HEK293 (cell line): ENCODE measurements at regions of chr7 and their contacts with region 1.

Region 1: GRCh38 chr7:151157645-151158329 is 9.7 kb downstream of the GBX1 start:
- H3K4me3 ChIP-seq: no peak overlapping the region
- H3K27ac ChIP-seq: peak overlapping the region; percentile 25; the same call in 1 of the 2 replicates
- H3K4me1 ChIP-seq: peaks cover 9% of the 10 kb centered on the region; the same call in 1 of the 2 replicates
- CTCF ChIP-seq: no peak

Region 2: GRCh38 chr7:151123822-151124464 is 33.8 kb before region 1 on chr7:
- CTCF ChIA-PET with region 1: interaction called, 17 read pairs
- POLR2A ChIA-PET with region 1: no interaction called
- H3K4me3 ChIP-seq: no peak overlapping the region
- H3K27ac ChIP-seq: no peak overlapping the region
- H3K4me1 ChIP-seq: no peaks in the 10 kb centered on the region
- CTCF ChIP-seq: peak; percentile 99

Region 3: GRCh38 chr7:151146761-151147160 is 11.0 kb before region 1 on chr7:
- CTCF ChIA-PET with region 1: no interaction called
- POLR2A ChIA-PET with region 1: interaction called, 10 read pairs
- H3K4me3 ChIP-seq: no peak overlapping the region
- H3K27ac ChIP-seq: no peak overlapping the region
- H3K4me1 ChIP-seq: no peaks in the 10 kb centered on the region
- CTCF ChIP-seq: no peak

Region 4: DNA sequence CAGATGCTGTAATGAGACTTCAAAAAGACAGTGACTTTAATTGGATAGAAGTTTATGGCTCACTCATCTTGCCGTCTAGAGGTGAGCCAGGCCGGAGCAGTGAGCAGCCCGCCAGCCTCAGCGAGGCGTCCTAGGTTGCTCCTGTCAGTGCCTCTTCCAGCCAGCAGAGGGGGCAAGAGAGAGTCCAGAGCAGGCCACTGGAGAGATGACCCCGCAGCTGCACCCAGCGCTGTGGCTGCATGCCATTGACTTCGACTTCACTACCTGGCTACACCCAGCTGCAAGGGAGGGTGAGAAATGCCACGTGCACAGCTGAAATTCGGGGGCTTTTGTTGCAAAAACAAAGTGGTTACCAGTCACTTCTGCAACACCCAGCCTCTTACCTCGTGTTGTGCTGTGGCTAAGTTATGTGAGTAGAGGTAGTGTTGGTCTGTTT is 210.4 kb after region 1 on chr7:
- CTCF ChIA-PET with region 1: no interaction called
- POLR2A ChIA-PET with region 1: no interaction called
- H3K4me3 ChIP-seq: no peak overlapping the region
- H3K27ac ChIP-seq: no peak overlapping the region
- H3K4me1 ChIP-seq: no peaks in the 10 kb centered on the region
- CTCF ChIP-seq: peak; percentile 85